ENCODE measurements at regions of chr5 and their contacts with region 1.

Region 1: DNA sequence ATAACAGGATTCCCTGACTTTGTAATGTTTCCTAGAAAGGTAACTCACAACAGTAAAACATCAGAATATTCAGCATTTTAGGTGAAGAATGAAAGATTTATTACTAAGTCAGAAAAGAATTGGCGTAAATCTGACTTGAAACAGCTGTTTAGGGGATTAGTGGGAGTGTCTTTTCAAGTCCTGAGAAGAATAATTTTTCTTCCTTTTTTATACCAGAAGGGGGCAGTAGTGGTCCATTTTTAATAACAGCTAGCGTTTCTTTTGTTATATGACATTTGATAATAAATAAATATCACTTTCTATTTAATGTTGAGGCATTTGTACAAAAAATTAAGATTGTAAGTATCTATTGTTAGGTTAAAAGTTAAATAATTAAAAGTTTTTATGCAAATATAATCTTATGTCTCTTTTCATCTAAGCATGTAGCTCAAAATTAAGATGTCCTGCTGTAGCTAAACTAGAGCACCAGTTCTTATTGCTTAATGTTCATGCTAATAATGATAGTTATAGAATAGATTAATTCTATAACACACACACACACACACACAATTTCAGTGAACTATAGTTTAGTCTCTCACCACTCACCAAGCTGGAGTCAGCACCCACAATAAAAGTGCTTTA is 258.7 kb upstream of the ARRDC3 start:
- DNase-seq: no peak
- ATAC-seq: no peak
- H3K4me3 Mint-ChIP-seq: no peak overlapping the region
- H3K27ac Mint-ChIP-seq: no peak overlapping the region
- H3K4me1 Mint-ChIP-seq: no peaks in the 10 kb centered on the region
- H3K27me3 Mint-ChIP-seq: no peaks in the 10 kb centered on the region
- CTCF ChIP-seq: peak; percentile 77

Region 2: DNA sequence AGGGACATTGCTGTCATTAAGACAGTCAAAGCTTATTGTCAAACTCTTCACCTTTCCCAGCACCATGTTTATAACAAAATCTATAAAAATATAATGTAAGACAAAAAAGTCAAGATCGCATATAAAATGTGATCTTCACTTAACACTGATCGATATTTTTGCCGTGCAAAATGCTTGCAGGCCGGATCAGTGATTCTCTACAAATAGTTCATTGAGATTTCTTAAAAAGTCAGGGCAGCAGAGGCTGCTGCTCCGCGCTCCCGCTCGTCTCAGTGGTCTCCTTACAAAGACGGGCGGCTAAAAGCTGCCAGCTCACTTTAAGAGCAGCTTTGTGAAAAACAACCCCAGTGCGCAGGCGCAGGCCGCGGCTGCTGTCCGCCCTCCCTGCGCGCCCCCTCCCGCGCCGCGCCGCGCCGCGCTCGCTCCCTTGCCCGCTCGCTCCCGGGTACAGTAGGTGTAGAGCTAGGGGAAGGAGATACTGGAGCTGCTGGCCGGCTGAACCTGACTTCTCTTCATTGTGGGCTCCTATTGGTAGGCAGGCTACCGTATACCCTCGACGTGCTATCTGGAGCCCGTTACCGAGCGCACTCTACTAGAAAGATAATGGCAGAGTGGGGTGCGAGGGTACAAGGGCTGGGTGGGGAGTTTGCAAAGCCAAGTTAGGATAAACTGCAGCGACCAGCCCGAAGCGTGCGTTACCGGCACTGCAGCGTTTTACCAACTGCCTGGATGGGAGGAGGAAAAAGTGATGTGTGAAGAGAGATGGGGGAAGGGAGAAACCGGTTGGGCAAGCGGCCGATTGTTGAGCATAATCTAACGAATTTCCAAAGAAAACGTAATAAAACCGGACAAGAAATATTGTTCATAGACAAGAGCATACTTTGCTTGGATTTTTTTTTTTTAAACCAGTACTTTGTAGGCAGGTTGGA is 258.5 kb before region 1 on chr5 and contains the start of gene ARRDC3:
- CTCF ChIA-PET with region 1: no interaction called
- POLR2A ChIA-PET with region 1: no interaction called
- intact Hi-C with region 1: no loop called
- DNase-seq: peak; percentile 96
- ATAC-seq: peak; percentile 63
- H3K4me3 Mint-ChIP-seq: peak within 1 kb of the TSS; percentile 93
- H3K27ac Mint-ChIP-seq: peak within 1 kb of the TSS; percentile 98
- H3K4me1 Mint-ChIP-seq: peaks cover 14% of the 10 kb centered on the region
- H3K27me3 Mint-ChIP-seq: no peaks in the 10 kb centered on the region
- CTCF ChIP-seq: no peak
- total RNA-seq, gene ARRDC3: 35.4 to 39.2 TPM

Region 3: GRCh38 chr5:91499943-91500531 is 141.8 kb before region 1 on chr5:
- CTCF ChIA-PET with region 1: interaction called, 24 read pairs
- POLR2A ChIA-PET with region 1: no interaction called
- intact Hi-C with region 1: no loop called
- DNase-seq: no peak
- ATAC-seq: no peak
- H3K4me3 Mint-ChIP-seq: no peak overlapping the region
- H3K27ac Mint-ChIP-seq: no peak overlapping the region
- H3K4me1 Mint-ChIP-seq: peaks cover 3% of the 10 kb centered on the region
- H3K27me3 Mint-ChIP-seq: no peaks in the 10 kb centered on the region
- CTCF ChIP-seq: peak; percentile 74